ENCODE measurements at regions of chr6 and their contacts with region 1.

Region 1: DNA sequence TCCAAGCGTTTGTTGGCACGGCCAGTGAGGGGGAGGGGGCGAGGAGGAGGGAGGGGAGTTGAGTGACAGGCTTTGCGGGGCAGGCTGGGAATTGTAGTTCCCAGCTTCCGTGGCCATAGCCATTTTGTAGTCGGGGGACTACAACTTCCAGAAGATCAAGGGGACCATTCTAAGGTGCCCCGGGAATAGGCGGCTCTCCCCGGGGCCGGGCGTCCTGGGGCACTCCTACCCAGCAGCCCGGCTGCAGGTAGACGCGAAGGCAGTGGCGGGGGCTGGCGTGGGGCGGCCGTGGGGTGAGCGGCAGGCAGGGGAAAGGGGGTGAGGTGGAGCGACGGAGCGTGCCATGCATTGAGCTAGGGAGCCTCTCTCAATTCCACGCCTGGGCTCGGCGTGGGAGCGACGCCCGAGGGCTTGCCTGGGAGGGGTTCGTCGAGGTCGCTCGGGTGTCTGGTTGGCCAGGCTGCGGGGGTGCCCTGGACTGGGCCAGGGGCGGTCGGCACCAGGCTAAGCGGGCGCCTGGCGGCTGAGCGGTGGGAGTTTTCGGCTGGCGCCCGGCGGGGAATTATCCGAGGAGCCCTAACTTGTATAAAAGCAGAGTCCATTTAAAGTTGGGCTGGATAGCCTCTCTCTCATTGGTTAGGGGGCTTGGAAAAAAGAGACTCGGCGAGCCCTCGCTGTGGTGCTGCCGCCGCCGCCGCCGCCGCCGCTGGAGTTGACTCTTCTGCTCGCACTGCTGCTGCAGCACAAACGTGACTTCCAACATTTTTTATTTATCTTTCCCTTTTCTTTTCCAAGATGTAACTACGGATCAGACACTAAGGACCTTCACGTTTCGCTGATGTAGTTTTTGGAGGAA is at the start of gene JARID2:
- DNase-seq: peak; percentile 99
- ATAC-seq: peak; percentile 60
- H3K4me3 Mint-ChIP-seq: peak within 1 kb of the TSS; percentile 92
- H3K27ac Mint-ChIP-seq: peak within 1 kb of the TSS; percentile 99
- H3K4me1 Mint-ChIP-seq: peaks cover 22% of the 10 kb centered on the region
- H3K27me3 Mint-ChIP-seq: no peaks in the 10 kb centered on the region
- total RNA-seq, gene JARID2: 43.0 to 48.6 TPM

Region 2: DNA sequence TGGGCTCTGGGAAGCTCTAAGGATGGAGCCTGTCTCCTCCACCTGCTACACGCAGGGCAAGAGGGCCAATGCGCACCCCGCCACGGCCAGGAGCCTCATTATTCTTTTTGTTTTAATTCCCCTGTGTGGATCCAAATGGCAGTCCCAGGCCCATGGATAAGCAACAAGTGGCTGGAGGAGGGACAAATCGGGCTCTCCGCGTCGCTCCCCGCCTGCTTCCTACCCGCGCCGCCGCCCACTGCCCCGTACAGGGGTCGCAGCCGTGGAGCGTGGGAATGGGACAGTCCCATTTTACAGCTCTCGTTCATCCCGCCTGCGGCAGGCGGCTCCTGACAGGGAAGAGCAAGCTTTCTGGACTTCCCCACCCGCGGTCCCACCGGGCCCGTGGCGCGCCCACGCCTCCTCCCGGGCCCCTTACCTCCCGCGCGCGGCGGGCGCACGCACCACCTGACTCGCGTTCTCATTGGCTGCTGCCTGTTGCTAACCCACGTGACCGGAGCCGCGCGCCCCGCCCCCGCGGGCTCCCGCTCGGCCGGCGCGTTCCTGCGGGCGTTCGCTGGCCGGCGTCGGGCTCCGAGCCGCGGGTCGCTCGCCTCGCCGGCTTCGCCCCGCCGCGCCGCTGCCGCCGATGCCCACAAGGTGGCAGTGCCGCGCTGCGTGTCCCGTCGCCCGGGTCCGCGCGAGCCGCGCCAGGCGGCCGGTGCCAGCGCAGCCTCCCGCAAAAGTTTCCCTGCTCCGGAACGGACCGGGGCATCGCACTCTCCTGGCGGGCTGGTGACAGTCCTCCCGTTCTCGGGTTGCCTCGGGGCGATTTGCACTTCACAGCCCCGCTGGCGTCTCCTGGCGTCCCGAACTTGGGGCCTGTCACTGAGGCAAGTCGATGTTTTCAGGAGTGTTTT is 1034.7 kb before region 1 on chr6:
- CTCF ChIA-PET with region 1: no interaction called
- POLR2A ChIA-PET with region 1: no interaction called
- intact Hi-C with region 1: loop called (anchors 1 kb)
- DNase-seq: peak; percentile 94
- ATAC-seq: peak; percentile 89
- H3K4me3 Mint-ChIP-seq: peak overlapping the region; percentile 75
- H3K27ac Mint-ChIP-seq: peak overlapping the region; percentile 86
- H3K4me1 Mint-ChIP-seq: peaks cover 35% of the 10 kb centered on the region
- H3K27me3 Mint-ChIP-seq: no peaks in the 10 kb centered on the region

Region 3: DNA sequence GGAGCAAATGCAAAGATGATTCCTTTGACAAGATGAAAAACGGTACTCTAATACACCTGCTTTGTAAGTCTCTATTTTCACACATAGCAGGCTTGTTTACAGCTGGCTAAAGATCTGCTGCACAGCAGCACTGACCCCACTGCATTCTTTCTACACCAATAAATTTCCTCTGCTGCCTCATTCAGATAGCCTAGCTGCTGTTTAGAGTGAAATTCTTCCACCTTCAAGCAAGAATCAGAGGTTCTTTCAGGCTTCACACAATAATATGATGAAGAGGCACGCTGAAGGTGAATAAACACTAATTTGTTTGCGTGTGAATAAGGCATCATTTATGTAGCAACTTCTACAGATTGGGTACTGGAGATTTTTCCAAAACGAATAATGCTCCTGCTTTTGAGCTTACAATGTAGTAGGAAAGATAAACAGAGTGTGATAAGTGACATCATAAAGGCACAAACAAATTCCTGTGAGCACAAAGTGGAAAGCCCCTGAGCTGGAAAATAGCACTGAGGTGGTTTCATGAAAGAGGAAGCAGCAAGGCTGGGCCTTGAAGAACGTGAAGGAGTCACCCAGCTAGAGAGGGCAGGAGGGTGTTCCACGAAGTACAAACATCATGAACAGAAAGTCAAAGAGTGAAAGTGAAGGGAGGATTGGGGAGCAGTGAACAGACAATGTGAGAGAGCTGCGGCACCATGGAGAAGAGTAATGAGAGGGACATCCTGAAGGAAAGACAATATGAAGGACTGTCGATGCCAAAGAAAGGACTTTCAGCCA is 584.6 kb before region 1 on chr6:
- CTCF ChIA-PET with region 1: interaction called, 3 read pairs
- POLR2A ChIA-PET with region 1: no interaction called
- intact Hi-C with region 1: loop called in 1 of 2 experiments (anchors 5 kb)
- DNase-seq: peak; percentile 66
- ATAC-seq: peak; percentile 76
- H3K4me3 Mint-ChIP-seq: no peak overlapping the region
- H3K27ac Mint-ChIP-seq: no peak overlapping the region
- H3K4me1 Mint-ChIP-seq: peaks cover 22% of the 10 kb centered on the region
- H3K27me3 Mint-ChIP-seq: no peaks in the 10 kb centered on the region

Region 4: DNA sequence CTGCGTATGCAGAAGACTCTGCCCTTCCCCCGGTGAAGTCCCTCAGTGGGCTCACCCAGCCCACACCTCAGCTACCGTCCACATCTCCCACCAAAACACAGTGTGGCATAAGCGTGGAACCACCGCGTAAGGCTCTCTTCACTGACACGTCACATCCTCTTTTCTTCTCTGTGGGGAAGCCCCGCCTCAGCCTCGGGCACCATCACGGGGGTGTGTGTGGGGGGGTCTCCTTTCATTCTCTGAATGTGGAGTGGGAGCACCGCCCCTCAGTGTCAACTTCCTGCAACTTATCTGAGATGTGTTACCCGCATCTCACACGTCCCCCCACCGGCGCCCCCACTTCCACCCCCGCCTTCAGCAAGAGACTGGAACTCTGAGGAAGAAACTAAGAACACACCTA is 388.1 kb before region 1 on chr6:
- CTCF ChIA-PET with region 1: no interaction called
- POLR2A ChIA-PET with region 1: no interaction called
- intact Hi-C with region 1: loop called (anchors 5 kb)
- DNase-seq: peak; percentile 80
- ATAC-seq: peak; percentile 71
- H3K4me3 Mint-ChIP-seq: peak overlapping the region; percentile 7
- H3K27ac Mint-ChIP-seq: peak overlapping the region; percentile 95
- H3K4me1 Mint-ChIP-seq: peaks cover 48% of the 10 kb centered on the region
- H3K27me3 Mint-ChIP-seq: no peaks in the 10 kb centered on the region

Region 5: DNA sequence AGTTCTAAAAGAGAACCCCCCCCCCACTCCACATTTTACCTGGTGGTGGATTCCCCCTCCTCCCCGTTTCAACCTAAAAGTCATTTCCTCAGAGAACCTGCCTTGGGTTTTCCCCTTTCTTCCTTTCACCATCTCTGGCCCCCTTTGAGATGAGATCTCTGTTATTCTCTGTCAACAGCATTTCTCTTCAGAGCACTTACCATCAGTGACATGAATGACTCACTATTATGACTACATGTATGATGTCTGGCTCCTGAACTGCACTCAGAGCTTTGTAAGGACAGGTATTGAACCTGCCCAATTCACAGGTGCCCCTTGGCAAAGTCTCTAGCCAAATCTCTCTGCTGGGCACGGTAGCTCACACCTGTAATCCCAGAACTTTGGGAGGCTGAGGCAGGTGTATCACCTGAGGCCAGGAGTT is 61.1 kb before region 1 on chr6:
- CTCF ChIA-PET with region 1: no interaction called
- POLR2A ChIA-PET with region 1: no interaction called
- intact Hi-C with region 1: loop called (anchors 1 kb)
- DNase-seq: peak; percentile 62
- ATAC-seq: peak; percentile 98
- H3K4me3 Mint-ChIP-seq: peak overlapping the region; percentile 23
- H3K27ac Mint-ChIP-seq: peak overlapping the region; percentile 96
- H3K4me1 Mint-ChIP-seq: peaks cover 23% of the 10 kb centered on the region
- H3K27me3 Mint-ChIP-seq: no peaks in the 10 kb centered on the region

Region 6: DNA sequence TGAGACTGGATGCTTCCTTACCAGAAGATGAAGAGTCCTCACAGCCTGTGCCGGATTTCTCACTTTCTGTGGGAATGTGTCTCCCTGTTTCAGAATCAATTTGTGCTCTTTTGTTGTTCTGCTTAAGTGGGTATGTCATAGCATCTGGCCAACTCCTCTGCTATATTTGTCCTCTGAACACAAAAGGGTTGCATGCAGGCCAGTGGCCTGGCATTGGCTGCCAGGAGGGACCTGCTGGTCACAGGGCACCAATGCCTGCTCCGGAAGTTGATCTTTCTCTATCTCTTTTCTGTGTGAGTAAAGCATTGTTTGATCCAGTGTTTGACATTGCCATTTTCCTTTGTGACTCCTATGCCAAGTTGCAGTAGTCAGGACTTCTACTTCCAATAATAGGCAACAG is 48.1 kb after region 1 on chr6:
- CTCF ChIA-PET with region 1: no interaction called
- POLR2A ChIA-PET with region 1: no interaction called
- intact Hi-C with region 1: no loop called
- DNase-seq: no peak
- ATAC-seq: no peak
- H3K4me3 Mint-ChIP-seq: no peak overlapping the region
- H3K27ac Mint-ChIP-seq: no peak overlapping the region
- H3K4me1 Mint-ChIP-seq: peaks cover 77% of the 10 kb centered on the region
- H3K27me3 Mint-ChIP-seq: no peaks in the 10 kb centered on the region

Region 7: DNA sequence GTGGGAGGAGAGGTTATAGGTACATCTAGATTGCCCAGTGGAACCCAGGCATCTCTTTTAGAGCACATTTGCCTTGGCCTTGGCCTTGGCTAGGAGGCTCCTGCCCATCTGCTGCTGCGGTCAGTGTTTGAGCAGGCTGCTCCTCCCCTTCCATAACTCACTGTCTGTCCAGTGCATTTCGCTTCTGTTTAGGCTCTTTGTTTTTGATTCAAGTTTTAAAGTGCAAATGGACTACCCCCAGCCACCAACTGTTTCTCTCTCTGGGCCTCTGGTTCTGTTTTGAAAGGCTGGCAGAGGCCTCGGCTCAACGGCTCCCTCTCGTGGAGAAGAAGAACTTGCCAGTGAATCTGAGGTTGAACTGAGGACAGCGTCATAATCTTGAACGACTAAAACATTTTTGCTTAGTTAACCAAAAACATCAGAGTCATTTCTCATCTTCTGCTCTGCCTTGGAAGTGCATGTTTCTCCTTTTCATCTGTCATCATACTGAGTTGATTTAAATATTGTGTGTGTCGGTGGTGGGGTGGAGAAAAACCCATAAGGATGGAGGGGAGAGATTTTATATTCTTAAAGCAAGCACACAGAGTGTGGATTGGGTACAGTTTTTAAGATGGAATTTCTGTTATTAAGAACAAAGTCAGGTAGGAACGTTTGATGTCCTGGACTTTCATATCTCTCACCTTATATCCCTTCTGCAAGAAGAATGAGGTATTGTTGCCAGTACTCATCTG is 245.8 kb after region 1 on chr6:
- CTCF ChIA-PET with region 1: no interaction called
- POLR2A ChIA-PET with region 1: no interaction called
- intact Hi-C with region 1: loop called (anchors 2 kb)
- DNase-seq: peak; percentile 86
- ATAC-seq: peak; percentile 82
- H3K4me3 Mint-ChIP-seq: no peak overlapping the region
- H3K27ac Mint-ChIP-seq: peak overlapping the region; percentile 82
- H3K4me1 Mint-ChIP-seq: peaks cover 42% of the 10 kb centered on the region
- H3K27me3 Mint-ChIP-seq: no peaks in the 10 kb centered on the region